ENCODE measurements at regions of chr6 and their contacts with region 1.

Region 1: DNA sequence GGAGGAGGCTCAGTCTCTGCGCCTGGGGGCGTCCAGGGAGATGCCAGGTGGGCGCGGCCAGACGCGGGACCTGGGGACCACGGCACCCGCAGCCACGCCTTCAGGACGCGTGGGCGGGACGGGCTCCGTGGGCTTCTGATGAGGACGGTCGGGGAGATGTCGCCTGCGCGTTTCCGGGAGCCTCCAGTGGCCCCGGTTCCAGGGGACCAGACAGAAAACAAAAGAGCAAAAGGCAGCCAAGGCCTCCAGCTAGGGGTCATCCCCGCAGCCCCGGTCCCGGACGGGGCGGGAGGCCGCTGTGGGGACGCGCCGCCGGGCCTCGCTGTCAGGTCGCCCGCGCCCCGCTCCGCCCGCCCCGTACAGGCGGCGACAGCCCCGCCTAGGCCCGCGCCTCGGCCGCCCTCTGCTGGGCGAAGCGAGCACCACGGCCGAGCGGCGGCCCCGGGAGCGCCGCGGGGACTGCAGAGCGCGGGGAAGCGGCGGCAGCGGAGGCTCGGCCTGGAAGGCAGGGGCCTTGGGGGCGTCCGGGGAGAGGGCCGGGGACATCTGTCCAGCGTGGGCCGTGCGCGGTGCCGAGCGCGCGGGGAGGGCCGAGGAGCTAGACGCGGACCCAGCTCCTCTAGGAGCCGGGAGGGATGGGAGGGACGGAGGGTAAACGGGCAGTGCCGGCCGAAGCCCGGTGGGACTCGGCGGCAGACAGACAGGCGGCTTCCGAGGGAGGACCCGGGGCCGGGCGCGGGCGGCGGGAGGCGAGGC is 48.7 kb downstream of the TMEM242 start:
- DNase-seq: peak; percentile 38 to 55
- ATAC-seq: peak; percentile 96
- H3K4me3 ChIP-seq: peak overlapping the region; percentile 58 to 89 (median 68)
- H3K27ac ChIP-seq: peak overlapping the region; percentile 59 to 77 (median 69)
- H3K4me1 ChIP-seq: peaks cover 3 to 7% of the 10 kb centered on the region in 2 donors
- H3K27me3 ChIP-seq: no peaks in the 10 kb centered on the region
- CTCF ChIP-seq: peak; percentile 23 to 99 (median 95)
- POLR2A ChIP-seq: peak in 1 of 2 donors; percentile 18

Region 2: GRCh38 chr6:157034436-157035230 is 240.0 kb before region 1 on chr6:
- in situ Hi-C with region 1: loop called in 1 of 4 experiments (anchors 25 kb)
- intact Hi-C with region 1: no loop called
- DNase-seq: no peak
- ATAC-seq: peak in 1 of 2 donors; percentile 42
- H3K4me3 ChIP-seq: no peak overlapping the region
- H3K27ac ChIP-seq: peak overlapping the region in 2 of 4 donors; percentile 4 to 8
- H3K4me1 ChIP-seq: peaks cover 41 to 45% of the 10 kb centered on the region in 2 donors
- H3K27me3 ChIP-seq: no peaks in the 10 kb centered on the region
- CTCF ChIP-seq: peak; percentile 22 to 55 (median 53)
- POLR2A ChIP-seq: no peak

Region 3: GRCh38 chr6:157139054-157139708 is 135.5 kb before region 1 on chr6:
- in situ Hi-C with region 1: no loop called
- intact Hi-C with region 1: loop called (anchors 10 kb)
- DNase-seq: no peak
- ATAC-seq: no peak
- H3K4me3 ChIP-seq: no peak overlapping the region
- H3K27ac ChIP-seq: no peak overlapping the region
- H3K4me1 ChIP-seq: no peaks in the 10 kb centered on the region
- H3K27me3 ChIP-seq: no peaks in the 10 kb centered on the region
- CTCF ChIP-seq: peak in 4 of 5 experiments; percentile 17 to 40 (median 26)
- POLR2A ChIP-seq: no peak

Region 4: GRCh38 chr6:157203312-157203744 is 71.3 kb before region 1 on chr6:
- in situ Hi-C with region 1: loop called in 1 of 4 experiments (anchors 10 kb)
- intact Hi-C with region 1: no loop called
- DNase-seq: no peak
- ATAC-seq: no peak
- H3K4me3 ChIP-seq: no peak overlapping the region
- H3K27ac ChIP-seq: no peak overlapping the region
- H3K4me1 ChIP-seq: peaks cover 10% of the 10 kb centered on the region in 2 donors
- H3K27me3 ChIP-seq: no peaks in the 10 kb centered on the region
- CTCF ChIP-seq: no peak
- POLR2A ChIP-seq: no peak

Region 5: DNA sequence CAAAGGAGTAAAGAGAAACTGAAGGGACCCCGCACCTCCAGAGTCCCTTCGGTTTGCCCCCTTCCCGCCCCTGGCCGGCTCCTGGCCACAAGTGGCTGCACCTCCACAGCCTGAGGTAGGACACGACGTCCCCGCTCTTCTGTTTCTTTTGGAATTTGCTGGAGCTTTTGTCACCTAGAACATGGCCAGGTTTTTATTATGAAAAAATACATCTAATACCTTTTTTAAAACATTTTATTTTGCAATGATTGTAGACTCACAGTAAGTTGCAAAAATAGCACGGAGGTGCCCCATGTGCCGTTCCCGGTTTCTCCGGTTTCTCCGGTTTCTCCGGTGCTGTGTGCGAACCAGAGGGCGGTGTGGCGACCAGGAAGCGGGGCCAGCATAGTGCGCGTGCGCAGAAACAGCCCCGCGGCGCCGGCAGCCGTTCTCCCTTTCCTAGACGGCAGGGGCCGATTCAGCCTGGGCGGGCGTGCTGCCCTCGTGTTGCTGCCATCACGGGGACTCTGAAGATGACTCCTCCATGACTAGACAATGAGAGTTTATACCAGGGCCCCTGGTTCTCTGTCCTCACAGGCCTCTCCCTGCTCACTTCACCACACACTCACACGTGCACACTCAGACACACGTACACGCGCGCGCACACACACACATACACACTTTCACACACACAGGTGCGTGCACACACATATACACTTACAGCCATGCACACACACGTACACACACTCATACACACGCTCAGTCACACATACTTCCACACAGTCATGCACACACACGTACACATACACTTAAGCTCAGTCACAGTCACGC is 53.4 kb before region 1 on chr6:
- in situ Hi-C with region 1: loop called in 1 of 4 experiments (anchors 10 kb)
- intact Hi-C with region 1: loop called (anchors 2 kb)
- DNase-seq: peak; percentile 44 to 71
- ATAC-seq: peak; percentile 70 to 75
- H3K4me3 ChIP-seq: peak overlapping the region; percentile 37 to 52 (median 44)
- H3K27ac ChIP-seq: no peak overlapping the region
- H3K4me1 ChIP-seq: peaks cover 18 to 21% of the 10 kb centered on the region in 2 donors
- H3K27me3 ChIP-seq: no peaks in the 10 kb centered on the region
- CTCF ChIP-seq: peak in 2 of 5 experiments; percentile 9 to 25
- POLR2A ChIP-seq: no peak